ENCODE measurements at regions of chr1 and their contacts with region 1.

Region 1: GRCh38 chr1:93779540-93780192 is 98.0 kb upstream of the BCAR3 start:
- DNase-seq: peak; percentile 84
- H3K4me3 ChIP-seq: no peak overlapping the region
- H3K27ac ChIP-seq: peak overlapping the region; percentile 93
- H3K4me1 ChIP-seq: peaks cover 17% of the 10 kb centered on the region
- H3K27me3 ChIP-seq: no peaks in the 10 kb centered on the region
- CTCF ChIP-seq: peak in 1 of 2 donors; percentile 19
- POLR2A ChIP-seq: no peak

Region 2: GRCh38 chr1:93576346-93576745 is 203.3 kb before region 1 on chr1:
- CTCF ChIA-PET with region 1: no interaction called
- POLR2A ChIA-PET with region 1: no interaction called
- dilution Hi-C with region 1: no loop called
- intact Hi-C with region 1: no loop called
- DNase-seq: no peak
- H3K4me3 ChIP-seq: no peak overlapping the region
- H3K27ac ChIP-seq: no peak overlapping the region
- H3K4me1 ChIP-seq: peaks cover 8% of the 10 kb centered on the region
- H3K27me3 ChIP-seq: no peaks in the 10 kb centered on the region
- CTCF ChIP-seq: no peak
- POLR2A ChIP-seq: no peak

Region 3: DNA sequence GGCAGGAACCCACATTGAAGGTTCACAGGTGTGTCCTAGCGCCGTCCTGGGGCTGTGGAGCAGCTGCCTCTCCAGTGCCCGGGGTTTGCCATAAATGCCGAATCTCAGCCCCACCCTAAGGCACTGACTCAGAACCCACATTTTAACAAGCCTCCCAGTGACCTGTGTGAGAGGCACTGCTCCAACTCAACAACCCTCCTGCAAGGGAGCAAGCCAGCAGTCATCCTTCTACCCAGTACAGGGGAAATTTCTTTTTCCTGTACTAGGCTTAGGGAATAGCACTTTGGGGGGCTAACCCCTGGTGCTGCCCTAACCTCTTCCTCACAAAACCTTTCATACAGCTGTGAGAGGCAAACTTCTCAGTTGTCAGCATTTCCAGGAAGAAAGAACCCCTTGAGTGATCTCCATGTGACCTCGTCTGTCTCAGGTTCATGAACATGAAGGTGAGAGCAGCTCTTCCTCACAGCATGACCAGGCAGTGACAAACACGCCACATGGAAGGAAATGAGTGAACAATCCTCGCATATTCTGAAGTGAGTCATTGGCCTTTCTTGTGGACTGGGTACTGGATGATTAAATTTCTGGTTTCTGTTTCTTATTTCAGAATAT is 86.6 kb before region 1 on chr1:
- CTCF ChIA-PET with region 1: no interaction called
- POLR2A ChIA-PET with region 1: no interaction called
- dilution Hi-C with region 1: no loop called
- intact Hi-C with region 1: loop called (anchors 2 kb)
- DNase-seq: peak; percentile 77
- H3K4me3 ChIP-seq: no peak overlapping the region
- H3K27ac ChIP-seq: peak overlapping the region; percentile 85
- H3K4me1 ChIP-seq: peaks cover 27% of the 10 kb centered on the region
- H3K27me3 ChIP-seq: no peaks in the 10 kb centered on the region
- CTCF ChIP-seq: no peak
- POLR2A ChIP-seq: no peak

Region 4: DNA sequence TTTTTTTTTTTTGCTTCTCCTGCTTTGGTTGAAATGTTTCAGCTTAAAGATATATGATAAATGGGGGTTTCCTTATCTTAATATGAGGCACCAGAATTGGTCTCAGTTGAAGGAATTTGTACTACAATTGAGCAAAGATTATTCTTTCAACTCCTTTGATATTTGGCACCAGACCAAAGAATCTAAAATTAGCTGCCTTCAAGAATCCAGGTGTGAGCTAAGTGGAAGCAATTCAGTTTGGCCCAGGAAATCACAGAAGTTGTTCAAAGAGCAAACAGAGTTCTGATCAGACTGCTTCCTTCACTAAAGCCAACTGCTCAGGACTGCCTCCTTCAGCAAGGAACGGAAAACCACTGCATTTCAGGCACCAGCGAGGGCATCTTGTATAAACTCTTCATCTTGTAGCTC is 29.8 kb before region 1 on chr1:
- CTCF ChIA-PET with region 1: interaction called, 3 read pairs
- POLR2A ChIA-PET with region 1: no interaction called
- dilution Hi-C with region 1: no loop called
- intact Hi-C with region 1: loop called (anchors 1 kb)
- DNase-seq: peak; percentile 15
- H3K4me3 ChIP-seq: no peak overlapping the region
- H3K27ac ChIP-seq: no peak overlapping the region
- H3K4me1 ChIP-seq: peaks cover 15% of the 10 kb centered on the region
- H3K27me3 ChIP-seq: no peaks in the 10 kb centered on the region
- CTCF ChIP-seq: peak in 1 of 2 donors; percentile 3
- POLR2A ChIP-seq: no peak